ENCODE measurements at regions of chr4 and their contacts with region 1.

Region 1: DNA sequence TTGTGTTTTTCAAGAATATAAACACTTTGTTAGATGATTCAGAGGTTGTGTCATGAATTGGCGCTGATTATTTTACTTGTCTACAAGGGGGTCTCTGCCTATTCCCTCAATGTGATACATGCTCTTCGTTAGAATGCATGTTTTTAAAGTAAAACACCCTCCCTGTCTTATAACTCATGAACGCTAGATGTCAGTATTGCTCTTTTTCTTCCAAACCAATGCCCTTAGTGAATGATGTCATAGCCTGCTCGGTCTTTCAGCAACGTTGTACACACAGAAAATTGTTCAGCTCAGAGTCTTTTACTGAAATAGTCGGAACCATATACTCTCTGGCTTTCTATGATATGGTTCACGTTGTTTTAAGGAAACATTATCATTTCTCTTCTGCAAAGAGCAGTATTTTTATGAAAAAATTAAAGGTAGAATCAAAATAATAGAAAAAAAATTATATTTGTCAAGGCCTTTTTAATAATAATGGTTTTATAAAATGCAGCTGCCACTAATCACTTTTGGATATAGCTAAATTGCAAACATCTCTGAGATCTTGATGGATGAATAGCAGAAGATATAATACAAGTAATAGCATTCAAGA is 292.9 kb downstream of the TLL1 start:
- DNase-seq: peak; percentile 52
- ATAC-seq: peak; percentile 80
- H3K4me3 ChIP-seq: no peak overlapping the region
- H3K27ac ChIP-seq: no peak overlapping the region
- H3K4me1 ChIP-seq: no peaks in the 10 kb centered on the region
- H3K27me3 ChIP-seq: no peaks in the 10 kb centered on the region
- CTCF ChIP-seq: peak; percentile 63; the same call in 1 of the 2 replicates

Region 2: DNA sequence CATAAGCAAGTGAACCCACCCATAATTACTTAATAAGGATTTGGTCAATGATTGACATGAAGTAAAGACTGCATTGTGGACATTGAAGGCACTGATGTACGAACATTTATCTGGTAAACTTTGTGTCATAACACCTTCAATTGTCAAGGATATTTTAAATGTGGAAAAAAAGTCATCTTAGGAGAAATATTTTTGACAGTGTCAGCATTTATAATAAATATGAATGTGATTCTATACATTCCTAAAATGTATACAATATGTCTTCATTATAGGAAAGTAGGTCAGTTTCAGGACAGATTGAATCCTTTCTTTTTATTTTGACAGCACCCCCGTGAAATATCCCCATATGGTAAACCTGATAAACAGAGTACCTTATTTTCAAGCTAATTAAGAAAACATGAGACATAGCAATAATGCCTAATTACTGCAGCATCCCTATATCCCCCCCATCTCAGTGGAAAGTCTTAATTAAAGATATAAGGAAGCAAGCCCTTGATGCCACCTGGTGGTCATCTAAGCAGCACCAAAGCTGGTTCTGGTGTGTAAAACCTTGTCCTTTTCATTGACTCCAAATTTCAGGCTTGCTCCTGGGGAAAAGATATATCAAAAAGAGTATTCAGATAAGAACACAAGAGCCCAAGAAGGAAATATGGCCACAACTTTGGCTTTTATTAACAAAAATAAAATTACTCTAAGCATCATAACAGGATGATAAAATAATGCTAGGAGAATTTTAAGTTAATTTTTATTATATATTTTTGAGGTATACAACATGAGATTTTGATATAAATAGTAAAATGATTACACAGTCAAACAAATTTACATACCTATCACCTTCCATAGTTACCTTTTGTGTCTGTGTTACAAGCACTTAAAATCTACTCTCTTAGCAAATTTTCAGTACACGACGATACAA is 86.8 kb after region 1 on chr4:
- CTCF ChIA-PET with region 1: no interaction called
- POLR2A ChIA-PET with region 1: no interaction called
- in situ Hi-C with region 1: no loop called
- intact Hi-C with region 1: loop called (anchors 5 kb)
- DNase-seq: no peak
- ATAC-seq: no peak
- H3K4me3 ChIP-seq: no peak overlapping the region
- H3K27ac ChIP-seq: no peak overlapping the region
- H3K4me1 ChIP-seq: no peaks in the 10 kb centered on the region
- H3K27me3 ChIP-seq: no peaks in the 10 kb centered on the region
- CTCF ChIP-seq: peak; percentile 50; the same call in 1 of the 2 replicates

Region 3: DNA sequence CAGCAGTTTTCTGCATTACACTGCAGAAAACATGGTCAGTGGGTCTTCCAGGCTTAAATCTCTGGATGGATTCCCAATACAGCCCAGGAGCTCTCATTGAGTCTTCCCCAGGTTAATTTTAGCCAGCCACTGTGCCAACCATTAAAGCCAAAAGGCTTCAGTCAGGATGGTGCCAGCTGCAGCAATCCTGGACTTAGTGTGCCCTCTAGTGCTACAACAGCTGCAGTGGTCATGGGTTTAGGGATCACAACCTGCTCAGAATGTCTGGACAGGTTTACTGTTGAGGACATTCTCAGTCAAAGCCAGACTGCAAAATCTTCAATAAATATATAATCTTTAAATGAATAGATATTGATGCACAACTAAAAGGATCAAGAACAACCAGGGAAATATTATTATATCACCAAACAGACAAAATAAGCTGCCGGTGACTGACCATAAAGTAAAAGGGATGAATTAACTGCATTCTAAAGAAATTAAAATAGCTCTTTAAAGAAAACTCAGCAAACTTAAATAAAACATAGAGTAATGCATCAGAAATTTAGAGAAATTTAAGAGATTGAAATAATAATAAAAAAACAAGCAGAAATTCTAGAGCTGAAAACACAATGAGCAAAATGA is 428.5 kb after region 1 on chr4:
- CTCF ChIA-PET with region 1: no interaction called
- POLR2A ChIA-PET with region 1: no interaction called
- in situ Hi-C with region 1: no loop called
- intact Hi-C with region 1: loop called (anchors 2 kb)
- DNase-seq: peak; percentile 10
- ATAC-seq: peak; percentile 81
- H3K4me3 ChIP-seq: no peak overlapping the region
- H3K27ac ChIP-seq: no peak overlapping the region
- H3K4me1 ChIP-seq: no peaks in the 10 kb centered on the region
- H3K27me3 ChIP-seq: no peaks in the 10 kb centered on the region
- CTCF ChIP-seq: peak; percentile 58

Region 4: DNA sequence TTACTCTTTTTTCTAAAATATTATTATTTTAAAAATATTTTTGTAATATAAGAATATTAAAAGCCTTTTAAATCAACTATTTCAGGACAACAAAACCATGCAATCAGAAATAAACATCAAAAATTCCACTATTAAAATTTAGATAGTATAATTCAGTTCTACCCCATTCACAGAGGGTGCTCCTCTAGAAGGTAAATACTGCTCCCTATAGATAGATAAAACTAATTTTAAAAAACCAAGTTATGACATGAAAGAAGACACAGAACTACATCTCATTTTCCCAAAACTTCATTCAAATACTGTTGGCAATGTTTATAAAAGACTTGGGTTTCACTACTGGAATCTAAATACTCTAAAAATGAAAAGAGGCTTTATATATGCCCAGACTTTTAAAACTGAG is 849.0 kb after region 1 on chr4:
- CTCF ChIA-PET with region 1: no interaction called
- POLR2A ChIA-PET with region 1: no interaction called
- in situ Hi-C with region 1: no loop called
- intact Hi-C with region 1: loop called (anchors 10 kb)
- DNase-seq: no peak
- ATAC-seq: no peak
- H3K4me3 ChIP-seq: no peak overlapping the region
- H3K27ac ChIP-seq: no peak overlapping the region
- H3K4me1 ChIP-seq: no peaks in the 10 kb centered on the region
- H3K27me3 ChIP-seq: no peaks in the 10 kb centered on the region
- CTCF ChIP-seq: no peak; the same call in 1 of the 2 replicates

Region 5: DNA sequence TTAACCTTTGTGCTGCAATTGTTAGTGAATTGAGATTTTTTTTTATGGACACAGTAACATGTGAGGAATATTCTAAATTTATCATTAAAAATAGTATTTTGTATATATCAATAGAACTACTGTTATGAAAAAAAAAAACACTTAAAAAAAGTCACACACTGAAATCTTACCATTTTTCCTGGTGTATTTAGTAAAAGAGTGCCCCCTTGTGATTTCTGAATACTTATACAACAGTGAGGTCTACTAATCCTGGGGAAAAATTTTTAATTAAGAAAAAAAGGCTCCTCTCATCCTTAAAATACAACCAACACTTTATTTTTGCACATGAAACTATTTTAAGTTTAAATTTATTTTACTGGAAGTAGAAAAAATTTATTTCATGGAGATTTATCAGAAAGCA is 1124.8 kb after region 1 on chr4:
- CTCF ChIA-PET with region 1: no interaction called
- POLR2A ChIA-PET with region 1: no interaction called
- in situ Hi-C with region 1: no loop called
- intact Hi-C with region 1: loop called (anchors 5 kb)
- DNase-seq: no peak
- ATAC-seq: no peak
- H3K4me3 ChIP-seq: no peak overlapping the region
- H3K27ac ChIP-seq: no peak overlapping the region
- H3K4me1 ChIP-seq: no peaks in the 10 kb centered on the region
- H3K27me3 ChIP-seq: no peaks in the 10 kb centered on the region
- CTCF ChIP-seq: peak; percentile 14; the same call in 1 of the 2 replicates